Activated naive CD4-positive, alpha-beta T cell treated with anti-CD3 and anti-CD28 coated beads for 36 hours (primary cell): ENCODE measurements at regions of chr1 and their contacts with region 1.

Region 1: DNA sequence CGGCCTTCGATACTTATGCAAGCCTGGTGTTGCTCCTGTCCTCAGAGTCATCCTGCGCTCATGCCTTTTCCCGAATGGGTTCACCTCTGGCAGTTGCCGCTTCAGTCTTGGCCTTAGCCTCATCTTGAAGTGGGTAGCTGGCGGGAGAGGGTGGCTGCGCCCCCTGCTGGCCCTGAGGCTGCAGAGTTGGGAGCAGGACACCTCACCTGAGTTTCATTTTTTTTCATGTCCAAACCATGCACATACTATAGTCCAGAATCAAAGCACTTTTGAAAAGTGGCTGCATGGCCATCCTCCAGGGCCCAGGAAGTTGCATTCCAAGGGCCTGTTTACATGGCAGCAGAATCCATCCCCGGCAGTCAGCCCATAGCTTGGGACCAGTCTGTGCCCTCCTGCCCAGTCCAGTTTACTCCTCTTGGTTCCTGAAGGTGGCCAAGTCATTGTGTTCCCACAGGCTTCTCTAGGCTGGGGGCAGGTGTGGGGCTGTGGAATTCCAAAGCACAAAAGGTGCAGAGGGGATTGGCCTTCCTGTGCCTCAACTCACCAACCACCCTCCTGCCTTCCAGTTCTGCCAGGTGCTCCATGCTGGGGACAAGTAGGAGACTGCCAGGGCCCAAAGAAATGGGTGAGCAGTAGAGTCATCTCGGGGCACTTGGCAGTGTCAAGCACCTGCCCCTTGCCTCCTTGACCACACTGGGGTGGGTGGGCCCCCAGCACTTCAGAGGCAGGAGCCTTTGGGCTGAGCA is 44.0 kb downstream of the YARS1 start:
- DNase-seq: peak; percentile 86
- H3K4me3 Mint-ChIP-seq: no peak overlapping the region
- H3K27ac Mint-ChIP-seq: no peak overlapping the region
- H3K4me1 Mint-ChIP-seq: peaks cover 10% of the 10 kb centered on the region
- H3K27me3 Mint-ChIP-seq: no peaks in the 10 kb centered on the region

Region 2: GRCh38 chr1:32448773-32449456 is 324.3 kb before region 1 on chr1:
- CTCF ChIA-PET with region 1: no interaction called
- intact Hi-C with region 1: loop called (anchors 1 kb)
- DNase-seq: no peak
- H3K4me3 Mint-ChIP-seq: no peak overlapping the region
- H3K27ac Mint-ChIP-seq: no peak overlapping the region
- H3K4me1 Mint-ChIP-seq: no peaks in the 10 kb centered on the region
- H3K27me3 Mint-ChIP-seq: peaks cover 19% of the 10 kb centered on the region

Region 3: GRCh38 chr1:32706491-32706890 is 66.7 kb before region 1 on chr1:
- CTCF ChIA-PET with region 1: interaction called, 126 read pairs
- intact Hi-C with region 1: no loop called
- DNase-seq: no peak
- H3K4me3 Mint-ChIP-seq: no peak overlapping the region
- H3K27ac Mint-ChIP-seq: no peak overlapping the region
- H3K4me1 Mint-ChIP-seq: peaks cover 11% of the 10 kb centered on the region
- H3K27me3 Mint-ChIP-seq: peaks cover 26% of the 10 kb centered on the region

Region 4: GRCh38 chr1:32733582-32734321 is 39.4 kb before region 1 on chr1:
- CTCF ChIA-PET with region 1: interaction called, 10 read pairs
- intact Hi-C with region 1: no loop called
- DNase-seq: no peak
- H3K4me3 Mint-ChIP-seq: no peak overlapping the region
- H3K27ac Mint-ChIP-seq: no peak overlapping the region
- H3K4me1 Mint-ChIP-seq: peaks cover 2% of the 10 kb centered on the region
- H3K27me3 Mint-ChIP-seq: no peaks in the 10 kb centered on the region

Region 5: DNA sequence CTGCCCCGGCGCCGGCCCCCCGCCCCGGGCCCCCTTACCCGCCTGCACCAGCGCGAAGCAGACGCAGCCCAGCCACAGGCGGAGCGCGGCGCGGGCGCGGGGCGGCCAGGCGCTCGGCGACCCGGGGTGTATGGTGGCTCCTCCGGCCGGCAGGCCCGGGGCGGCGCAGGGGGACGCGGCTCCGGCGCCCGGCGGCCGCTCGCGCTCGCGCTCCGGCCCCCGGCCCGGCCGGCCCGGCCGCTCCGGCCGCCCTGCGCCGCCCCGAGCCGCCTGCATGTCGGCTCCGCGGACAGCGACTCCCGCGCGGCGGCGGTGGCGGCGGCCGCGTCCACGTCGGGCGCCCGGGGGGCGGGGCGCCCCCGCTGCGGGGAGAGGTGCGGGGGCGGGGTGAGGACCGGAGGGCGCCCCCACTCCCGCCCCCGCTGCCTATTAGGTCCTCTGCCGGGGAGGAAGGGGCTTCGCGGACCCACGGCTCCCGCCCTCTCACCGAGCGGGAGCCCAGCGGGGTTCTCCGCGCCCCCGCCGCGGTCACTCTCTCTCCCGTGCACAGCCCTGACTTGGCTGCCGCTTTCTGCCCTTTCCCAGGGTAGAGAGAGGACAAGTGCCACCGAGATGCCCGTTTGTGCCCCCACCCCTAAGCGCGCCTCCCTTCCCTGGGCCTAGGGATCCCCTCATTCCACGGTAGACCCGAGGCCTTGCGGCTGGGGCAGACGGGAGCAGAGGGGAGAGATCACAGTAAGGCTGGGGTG is 97.6 kb after region 1 on chr1 and contains the start of gene FNDC5:
- CTCF ChIA-PET with region 1: interaction called, 15 read pairs
- intact Hi-C with region 1: loop called (anchors 2 kb)
- DNase-seq: no peak
- H3K4me3 Mint-ChIP-seq: peak within 1 kb of the TSS; percentile 35
- H3K27ac Mint-ChIP-seq: no peak within 1 kb of the TSS
- H3K4me1 Mint-ChIP-seq: peaks cover 6% of the 10 kb centered on the region
- H3K27me3 Mint-ChIP-seq: peaks cover 39% of the 10 kb centered on the region
- total RNA-seq, gene FNDC5: not detected